ENCODE measurements at regions of chr18 and their contacts with region 1.

Region 1: GRCh38 chr18:70068981-70069380 is 121.3 kb upstream of the CD226 start:
- DNase-seq: no peak
- H3K4me3 ChIP-seq: no peak overlapping the region
- H3K27ac ChIP-seq: no peak overlapping the region
- H3K4me1 ChIP-seq: no peaks in the 10 kb centered on the region
- H3K27me3 ChIP-seq: no peaks in the 10 kb centered on the region
- CTCF ChIP-seq: no peak
- POLR2A ChIP-seq: no peak

Region 2: GRCh38 chr18:69916412-69916811 is 152.6 kb before region 1 on chr18:
- intact Hi-C with region 1: no loop called
- DNase-seq: no peak
- H3K4me3 ChIP-seq: no peak overlapping the region
- H3K27ac ChIP-seq: no peak overlapping the region
- H3K4me1 ChIP-seq: no peaks in the 10 kb centered on the region
- H3K27me3 ChIP-seq: no peaks in the 10 kb centered on the region
- CTCF ChIP-seq: no peak
- POLR2A ChIP-seq: no peak

Region 3: GRCh38 chr18:70004696-70005095 is 64.3 kb before region 1 on chr18:
- intact Hi-C with region 1: loop called (anchors 10 kb)
- DNase-seq: no peak
- H3K4me3 ChIP-seq: no peak overlapping the region
- H3K27ac ChIP-seq: no peak overlapping the region
- H3K4me1 ChIP-seq: no peaks in the 10 kb centered on the region
- H3K27me3 ChIP-seq: no peaks in the 10 kb centered on the region
- CTCF ChIP-seq: no peak
- POLR2A ChIP-seq: no peak